ENCODE measurements at regions of chr3 and their contacts with region 1.

Region 1: GRCh38 chr3:121749276-121750086 is at the start of gene GOLGB1:
- DNase-seq: peak; percentile 97
- H3K4me3 Mint-ChIP-seq: no peak within 1 kb of the TSS
- H3K27ac Mint-ChIP-seq: no peak within 1 kb of the TSS
- H3K4me1 Mint-ChIP-seq: peaks cover 9% of the 10 kb centered on the region
- H3K27me3 Mint-ChIP-seq: peaks cover 20% of the 10 kb centered on the region
- total RNA-seq, gene GOLGB1: 21.0 and 22.2 TPM in 2 replicates

Region 2: DNA sequence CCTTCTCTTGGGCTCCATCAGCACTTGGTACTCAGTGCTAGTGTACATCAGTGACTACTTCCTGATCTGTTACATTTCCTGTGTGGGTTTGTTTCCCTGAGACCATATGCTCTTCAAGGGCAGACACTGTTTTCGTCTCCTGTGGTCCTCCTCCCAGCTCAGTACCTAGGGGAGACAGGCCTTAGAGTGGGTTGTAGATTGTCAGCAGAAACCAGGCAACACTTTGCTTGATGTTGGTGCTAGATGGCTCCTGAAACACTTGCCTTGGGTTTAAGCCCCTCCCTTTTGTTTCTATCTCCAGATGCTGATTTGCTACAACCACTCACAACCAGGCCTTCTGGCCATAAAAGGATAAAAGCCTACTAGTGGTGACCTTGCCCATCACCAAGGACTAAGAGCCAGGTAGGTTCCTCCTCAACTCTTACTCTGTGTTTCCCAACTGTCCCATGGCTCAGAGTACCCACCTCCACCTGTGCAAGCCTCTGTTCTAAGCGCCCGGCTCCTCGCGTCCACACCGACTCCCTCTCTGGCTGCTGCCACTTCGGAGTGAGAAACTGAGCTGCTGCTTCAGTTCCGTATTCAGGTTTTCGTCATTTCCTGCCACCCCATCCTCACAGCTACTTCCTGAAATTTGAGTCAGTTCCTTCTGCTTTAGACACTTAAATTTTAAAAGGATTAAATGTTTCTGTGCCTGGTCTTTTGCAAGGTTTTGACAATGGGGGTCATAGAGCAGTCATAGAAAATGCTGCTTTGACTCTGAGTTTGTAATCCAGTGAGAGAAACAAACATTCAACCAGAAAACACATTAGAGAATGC is 88.9 kb before region 1 on chr3 and contains the start of gene HCLS1:
- intact Hi-C with region 1: loop called (anchors 1 kb)
- DNase-seq: peak; percentile 92
- H3K4me3 Mint-ChIP-seq: peak within 1 kb of the TSS; percentile 91
- H3K27ac Mint-ChIP-seq: peak within 1 kb of the TSS; percentile 97
- H3K4me1 Mint-ChIP-seq: peaks cover 46% of the 10 kb centered on the region
- H3K27me3 Mint-ChIP-seq: no peaks in the 10 kb centered on the region
- total RNA-seq, gene HCLS1: 210 and 216 TPM in 2 replicates

Region 3: GRCh38 chr3:121735047-121735696 is 14.3 kb before region 1 on chr3:
- intact Hi-C with region 1: loop called (anchors 1 kb)
- DNase-seq: no peak
- H3K4me3 Mint-ChIP-seq: no peak overlapping the region
- H3K27ac Mint-ChIP-seq: peak overlapping the region; percentile 60
- H3K4me1 Mint-ChIP-seq: peaks cover 24% of the 10 kb centered on the region
- H3K27me3 Mint-ChIP-seq: no peaks in the 10 kb centered on the region

Measured in activated CD4-positive, alpha-beta T cell treated with anti-CD3 and anti-CD28 coated beads, Interleukin-2, amount 10 ng/mL, durations not matched to agents 24 days and 14 days (primary cell).